Ascending aorta (tissue), 2 donors: ENCODE measurements at regions of chr6 and their contacts with region 1.

Region 1: GRCh38 chr6:108737594-108738546 is 110.4 kb upstream of the ARMC2 start:
- DNase-seq: peak; percentile 52 to 94
- H3K4me3 ChIP-seq: no peak overlapping the region
- H3K27ac ChIP-seq: peak overlapping the region; percentile 70 to 79
- H3K4me1 ChIP-seq: peaks cover 12 to 54% of the 10 kb centered on the region in 2 donors
- H3K27me3 ChIP-seq: no peaks in the 10 kb centered on the region
- CTCF ChIP-seq: no peak

Region 2: DNA sequence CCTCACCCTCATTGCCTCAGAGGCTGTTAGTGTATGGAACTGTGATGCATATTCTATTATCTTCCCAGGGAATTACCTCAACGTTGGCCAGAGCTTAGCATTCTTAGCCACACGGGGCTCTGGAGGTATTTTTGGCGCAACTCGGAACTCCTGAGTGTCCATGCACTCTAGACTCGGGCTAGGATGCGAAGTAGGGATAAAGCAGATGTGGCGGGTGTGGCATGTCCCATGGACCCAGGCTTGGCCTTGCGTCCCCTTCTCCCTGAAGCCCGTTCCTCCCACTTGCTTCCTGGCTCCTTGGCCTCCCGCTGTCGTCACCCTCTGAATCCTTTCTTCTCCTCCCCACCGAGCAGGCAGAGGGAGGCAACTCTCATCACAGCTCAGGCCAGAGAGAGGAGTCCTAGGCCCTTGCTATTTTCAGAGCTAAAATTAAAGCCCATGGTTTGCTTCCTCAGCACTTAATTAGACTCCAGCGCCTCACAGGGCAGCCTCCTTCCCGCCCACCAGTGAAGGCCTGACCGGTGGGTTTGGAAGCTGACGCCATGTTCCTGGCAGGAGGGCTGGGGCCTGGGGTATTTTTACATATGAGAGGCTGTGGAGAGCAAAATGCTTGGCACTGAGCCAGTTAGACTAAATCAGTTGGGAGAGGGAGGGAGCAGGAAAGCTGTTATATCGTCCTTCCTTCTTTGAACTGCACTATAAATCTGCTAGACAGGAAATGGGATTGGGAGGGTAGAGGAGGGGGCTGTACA is 38.4 kb before region 1 on chr6:
- intact Hi-C with region 1: loop called (anchors 2 kb)
- DNase-seq: peak in 1 of 2 donors; percentile 73
- H3K4me3 ChIP-seq: no peak overlapping the region
- H3K27ac ChIP-seq: peak overlapping the region; percentile 77 to 82
- H3K4me1 ChIP-seq: peaks cover 14 to 27% of the 10 kb centered on the region in 2 donors
- H3K27me3 ChIP-seq: no peaks in the 10 kb centered on the region
- CTCF ChIP-seq: no peak

Region 3: DNA sequence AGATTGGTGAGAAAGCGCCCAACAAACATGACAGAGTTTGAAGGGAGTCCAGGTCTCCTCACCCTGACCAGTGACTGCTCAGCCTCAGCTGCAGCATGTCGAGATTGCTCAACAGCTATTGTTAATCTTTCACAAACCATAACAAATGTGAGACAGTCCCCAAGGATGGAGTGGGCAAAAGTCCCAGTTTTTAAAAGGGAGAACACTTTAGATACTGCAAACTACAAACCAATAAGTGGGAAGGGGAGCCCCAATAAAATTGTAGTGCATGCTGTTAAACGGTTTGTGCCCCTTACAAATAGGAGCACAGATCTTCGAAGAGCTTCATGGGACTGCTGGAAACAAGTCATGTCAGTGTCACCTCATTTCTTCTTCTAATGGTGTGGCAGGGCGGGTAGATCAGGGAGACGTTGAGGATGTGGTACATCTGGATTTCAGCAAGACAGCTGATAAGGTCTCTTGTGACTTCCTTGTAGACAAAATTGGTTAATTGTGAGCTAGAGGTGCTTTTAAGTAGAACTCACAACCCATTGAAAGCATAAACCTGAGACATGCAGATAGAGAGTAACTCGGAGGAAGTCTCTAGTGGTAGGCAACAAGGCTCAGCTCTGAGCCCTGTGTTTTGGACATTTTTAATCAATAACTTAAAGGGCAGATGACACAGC is 23.6 kb before region 1 on chr6:
- intact Hi-C with region 1: loop called (anchors 1 kb)
- DNase-seq: peak in 1 of 2 donors; percentile 82
- H3K4me3 ChIP-seq: no peak overlapping the region
- H3K27ac ChIP-seq: peak overlapping the region in 1 of 2 donors; percentile 32
- H3K4me1 ChIP-seq: peaks cover 3 to 24% of the 10 kb centered on the region in 2 donors
- H3K27me3 ChIP-seq: no peaks in the 10 kb centered on the region
- CTCF ChIP-seq: no peak